ENCODE measurements at regions of chr12 and their contacts with region 1.

Region 1: DNA sequence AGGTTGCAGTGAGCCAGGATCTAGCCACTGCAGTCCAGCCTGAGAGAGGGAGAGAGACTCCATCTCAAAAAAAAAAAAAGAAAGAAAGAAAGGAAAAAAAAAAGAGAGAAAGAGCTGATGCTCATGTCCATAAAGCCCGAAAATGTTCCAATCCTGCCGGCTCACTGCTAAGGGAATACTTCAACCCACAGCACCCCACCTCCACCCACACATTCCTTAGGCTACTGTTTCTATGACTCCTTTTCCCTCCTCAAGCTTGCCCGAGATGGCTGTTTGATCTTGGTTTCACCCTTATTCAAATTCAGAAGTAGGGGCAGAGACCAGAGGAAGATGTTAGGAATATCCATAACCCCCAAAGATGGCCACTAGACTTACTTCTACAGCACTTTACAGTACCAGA is 59.5 kb upstream of the RASSF3 start:
- DNase-seq: no peak
- ATAC-seq: no peak
- H3K4me3 ChIP-seq: no peak overlapping the region
- H3K27ac ChIP-seq: no peak overlapping the region
- H3K4me1 ChIP-seq: no peaks in the 10 kb centered on the region
- H3K27me3 ChIP-seq: no peaks in the 10 kb centered on the region
- CTCF ChIP-seq: no peak
- POLR2A ChIP-seq: no peak
- RAD21 ChIP-seq: no peak

Region 2: DNA sequence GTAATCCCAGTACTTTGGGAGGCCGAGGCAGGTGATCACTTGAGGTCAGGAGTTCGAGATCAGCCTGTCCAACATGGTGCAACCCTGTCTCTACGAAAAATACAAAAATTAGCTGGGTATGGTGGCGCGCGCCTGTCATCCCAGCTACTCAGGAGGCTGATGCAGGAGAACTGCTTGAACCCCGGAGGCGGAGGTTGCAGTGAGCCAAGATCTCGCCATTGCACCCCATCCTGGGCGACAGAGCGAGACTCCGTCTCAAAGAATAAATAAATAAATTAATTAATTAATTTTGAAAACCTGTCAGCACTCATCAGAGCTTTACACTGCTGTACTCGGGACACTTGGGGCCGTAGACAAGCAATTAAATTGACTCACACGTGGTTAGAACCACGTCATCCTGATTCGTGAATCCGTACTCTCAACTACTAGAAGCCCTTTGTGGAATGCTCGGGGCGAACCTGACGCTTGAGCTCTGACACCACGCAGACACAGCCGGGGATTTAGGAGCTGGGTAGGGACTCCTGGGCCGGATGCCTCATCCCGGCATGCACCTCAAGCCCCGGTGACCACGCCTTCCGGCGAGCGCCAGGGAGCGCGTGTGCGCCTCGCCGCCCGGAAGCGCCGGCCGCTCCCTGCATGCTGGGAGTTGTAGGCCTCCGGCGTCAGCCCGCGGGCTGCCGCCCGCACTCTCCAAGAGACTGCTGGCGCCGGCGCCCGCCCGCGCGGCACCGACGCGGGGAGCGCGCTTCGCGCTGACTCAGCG is 146.9 kb before region 1 on chr12 and contains the start of gene XPOT:
- CTCF ChIA-PET with region 1: no interaction called
- POLR2A ChIA-PET with region 1: no interaction called
- dilution Hi-C with region 1: no loop called
- in situ Hi-C with region 1: no loop called
- intact Hi-C with region 1: no loop called
- DNase-seq: peak; percentile 98
- ATAC-seq: peak; percentile 90
- H3K4me3 ChIP-seq: peak within 1 kb of the TSS; percentile 77
- H3K27ac ChIP-seq: peak within 1 kb of the TSS; percentile 97
- H3K4me1 ChIP-seq: peaks cover 5% of the 10 kb centered on the region
- H3K27me3 ChIP-seq: no peaks in the 10 kb centered on the region
- CTCF ChIP-seq: no peak
- POLR2A ChIP-seq: 0 out of 2 replicates have a peak, but pooled peaks have one; percentile 13
- RAD21 ChIP-seq: no peak
- total RNA-seq, gene XPOT: 79.4 and 80.8 TPM in 2 replicates

Region 3: GRCh38 chr12:64696080-64696741 is 145.5 kb after region 1 on chr12:
- CTCF ChIA-PET with region 1: interaction called, 27 read pairs
- POLR2A ChIA-PET with region 1: no interaction called
- dilution Hi-C with region 1: no loop called
- in situ Hi-C with region 1: loop called (anchors 5 kb)
- intact Hi-C with region 1: loop called (anchors 1 kb)
- DNase-seq: peak; percentile 43
- ATAC-seq: peak; percentile 15; the same call in 1 of the 2 replicates
- H3K4me3 ChIP-seq: no peak overlapping the region
- H3K27ac ChIP-seq: no peak overlapping the region
- H3K4me1 ChIP-seq: peaks cover 3% of the 10 kb centered on the region
- H3K27me3 ChIP-seq: no peaks in the 10 kb centered on the region
- CTCF ChIP-seq: peak; percentile 54
- POLR2A ChIP-seq: no peak
- RAD21 ChIP-seq: peak; percentile 63

Region 4: DNA sequence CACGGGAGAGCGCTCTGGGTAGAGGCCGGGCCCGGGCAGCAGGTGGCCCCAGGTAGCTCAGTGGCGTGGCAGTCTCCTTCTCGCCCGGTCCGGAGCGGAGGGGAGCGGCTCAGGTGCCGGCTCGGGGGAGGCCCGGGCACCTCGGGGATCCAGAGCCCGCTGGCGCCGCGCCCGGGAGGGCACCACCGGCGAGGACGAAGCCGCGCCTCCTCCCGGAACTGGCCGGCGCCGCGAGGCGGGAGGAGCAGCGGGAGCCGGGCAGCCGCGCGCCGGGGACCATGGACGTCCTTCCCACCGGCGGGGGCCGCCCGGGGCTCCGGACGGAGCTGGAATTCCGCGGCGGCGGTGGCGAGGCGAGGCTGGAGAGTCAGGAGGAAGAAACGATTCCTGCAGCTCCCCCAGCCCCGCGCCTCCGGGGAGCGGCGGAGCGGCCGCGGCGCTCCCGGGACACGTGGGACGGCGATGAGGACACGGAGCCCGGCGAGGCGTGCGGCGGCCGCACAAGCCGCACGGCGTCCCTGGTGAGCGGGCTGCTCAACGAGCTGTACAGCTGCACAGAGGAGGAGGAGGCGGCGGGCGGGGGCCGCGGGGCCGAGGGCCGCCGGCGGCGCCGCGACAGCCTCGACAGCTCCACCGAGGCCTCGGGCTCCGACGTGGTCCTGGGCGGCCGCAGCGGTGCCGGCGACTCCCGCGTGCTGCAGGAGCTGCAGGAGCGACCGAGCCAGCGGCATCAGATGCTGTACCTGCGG is 229.9 kb after region 1 on chr12:
- CTCF ChIA-PET with region 1: no interaction called
- POLR2A ChIA-PET with region 1: interaction called, 12 read pairs
- dilution Hi-C with region 1: no loop called
- in situ Hi-C with region 1: no loop called
- intact Hi-C with region 1: no loop called
- DNase-seq: no peak
- ATAC-seq: peak; percentile 82
- H3K4me3 ChIP-seq: peak overlapping the region; percentile 37; the same call in 1 of the 2 replicates
- H3K27ac ChIP-seq: no peak overlapping the region
- H3K4me1 ChIP-seq: peaks cover 2% of the 10 kb centered on the region; the same call in 1 of the 2 replicates
- H3K27me3 ChIP-seq: peaks cover 51% of the 10 kb centered on the region
- CTCF ChIP-seq: no peak
- POLR2A ChIP-seq: no peak
- RAD21 ChIP-seq: no peak